ENCODE measurements at regions of chr11 and their contacts with region 1.

Region 1: DNA sequence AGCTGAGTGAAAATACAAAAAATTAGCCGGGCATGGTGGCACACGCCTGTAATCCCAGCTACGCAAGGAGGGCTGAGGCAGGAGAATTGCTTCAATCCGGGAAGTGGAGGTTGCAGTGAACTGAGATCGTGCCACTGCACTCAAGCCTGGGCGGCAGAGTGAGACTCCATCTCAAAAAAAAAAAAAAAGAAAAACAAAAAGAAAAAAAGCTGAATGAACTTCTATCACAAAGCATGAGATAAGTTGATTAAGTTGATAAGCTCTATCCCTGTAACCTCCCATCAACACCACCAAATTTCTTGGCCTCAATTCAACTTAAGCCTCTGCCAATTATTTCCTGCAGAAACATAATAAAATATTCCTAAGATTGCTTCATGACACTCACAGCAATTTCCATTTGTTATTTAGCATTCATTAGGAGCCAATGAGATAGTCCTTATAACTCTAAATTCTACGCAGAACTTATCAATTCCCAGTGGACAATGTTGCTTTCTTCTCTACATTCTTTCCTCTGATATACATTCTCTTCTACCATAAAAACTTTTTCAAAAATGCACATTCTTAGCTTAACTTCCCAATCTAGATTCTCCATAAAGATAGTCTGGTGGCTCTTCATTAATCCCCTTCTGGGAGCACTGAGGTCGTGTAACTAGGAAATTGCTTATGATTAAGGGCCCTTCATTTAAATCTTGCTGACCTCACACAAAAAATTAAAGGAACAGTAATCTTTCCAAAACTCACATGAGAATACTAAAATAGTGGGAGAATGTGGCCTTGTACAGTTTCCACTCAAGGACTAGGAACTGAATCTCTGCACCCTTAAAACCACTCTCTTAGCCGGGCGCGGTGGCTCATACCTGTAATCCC is 2.9 kb downstream of the AMBRA1 start:
- DNase-seq: no peak
- H3K4me3 Mint-ChIP-seq: peak overlapping the region; percentile 71
- H3K27ac Mint-ChIP-seq: peak overlapping the region; percentile 10
- H3K4me1 Mint-ChIP-seq: peaks cover 21% of the 10 kb centered on the region
- H3K27me3 Mint-ChIP-seq: no peaks in the 10 kb centered on the region
- CTCF ChIP-seq: no peak

Region 2: DNA sequence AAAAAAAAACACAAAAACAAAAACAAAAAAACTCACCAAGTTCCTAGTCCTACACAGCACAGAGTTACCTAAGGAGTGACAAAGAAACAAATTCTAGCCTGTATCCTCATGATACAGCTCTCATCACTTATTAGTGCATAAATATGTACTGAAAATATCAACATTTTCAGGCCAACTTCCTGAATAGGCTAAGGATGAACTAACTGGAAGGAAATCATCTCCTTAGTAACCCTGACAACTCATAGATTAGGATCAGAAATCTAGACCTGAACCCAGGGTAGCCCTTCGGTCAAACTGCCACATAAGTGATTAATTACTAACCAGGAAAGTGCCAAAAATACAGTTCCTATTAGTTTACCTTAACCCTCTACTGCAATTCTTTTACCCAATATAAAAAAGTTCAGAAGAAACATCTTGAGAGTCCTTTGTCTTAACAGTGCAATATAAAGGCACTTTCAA is 37.2 kb before region 1 on chr11:
- CTCF ChIA-PET with region 1: interaction called, 6 read pairs
- intact Hi-C with region 1: loop called (anchors 2 kb)
- DNase-seq: peak; percentile 49
- H3K4me3 Mint-ChIP-seq: peak overlapping the region; percentile 48
- H3K27ac Mint-ChIP-seq: peak overlapping the region; percentile 86
- H3K4me1 Mint-ChIP-seq: peaks cover 33% of the 10 kb centered on the region
- H3K27me3 Mint-ChIP-seq: no peaks in the 10 kb centered on the region
- CTCF ChIP-seq: no peak

Region 3: GRCh38 chr11:46616998-46617675 is 26.2 kb after region 1 on chr11 and contains the starts of genes ATG13 and HARBI1:
- CTCF ChIA-PET with region 1: no interaction called
- intact Hi-C with region 1: no loop called
- DNase-seq: peak; percentile 93
- H3K4me3 Mint-ChIP-seq: peak within 1 kb of the TSS; percentile 88
- H3K27ac Mint-ChIP-seq: peak within 1 kb of the TSS; percentile 98
- H3K4me1 Mint-ChIP-seq: peaks cover 15% of the 10 kb centered on the region
- H3K27me3 Mint-ChIP-seq: no peaks in the 10 kb centered on the region
- CTCF ChIP-seq: no peak
- total RNA-seq, gene ATG13: 53.2 and 57.1 TPM in 2 replicates
- total RNA-seq, gene HARBI1: 8.2 and 10.1 TPM in 2 replicates